H1 (cell line): ENCODE measurements at regions of chr5 and their contacts with region 1.

Region 1: DNA sequence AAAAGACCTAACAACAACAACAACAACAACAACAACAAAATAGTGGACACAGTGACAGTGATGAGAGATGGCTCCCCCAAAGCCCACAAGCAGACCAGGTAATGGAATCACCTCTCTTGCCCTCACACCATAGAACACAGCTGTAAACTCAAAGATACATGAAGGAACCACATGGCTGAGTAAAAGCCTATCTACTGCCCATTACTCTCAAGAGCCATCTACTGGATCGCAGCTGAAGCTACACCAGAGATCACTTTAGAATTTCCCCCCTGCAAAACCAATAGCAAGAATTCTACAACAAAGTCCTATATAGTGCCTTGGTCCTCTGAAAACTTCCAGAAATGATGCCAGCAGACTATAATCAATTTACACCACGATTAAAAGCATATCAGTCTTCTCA is 1537.6 kb upstream of the CDH9 start:
- DNase-seq: no peak
- H3K4me3 ChIP-seq: no peak overlapping the region
- H3K27ac ChIP-seq: no peak overlapping the region
- H3K4me1 ChIP-seq: no peaks in the 10 kb centered on the region
- H3K27me3 ChIP-seq: no peaks in the 10 kb centered on the region
- CTCF ChIP-seq: peak in 2 of 3 experiments; percentile 59 to 67; a peak in 3 of 4 replicates
- EP300 ChIP-seq: no peak
- POLR2A ChIP-seq: no peak
- RAD21 ChIP-seq: peak; percentile 65 to 67

Region 2: DNA sequence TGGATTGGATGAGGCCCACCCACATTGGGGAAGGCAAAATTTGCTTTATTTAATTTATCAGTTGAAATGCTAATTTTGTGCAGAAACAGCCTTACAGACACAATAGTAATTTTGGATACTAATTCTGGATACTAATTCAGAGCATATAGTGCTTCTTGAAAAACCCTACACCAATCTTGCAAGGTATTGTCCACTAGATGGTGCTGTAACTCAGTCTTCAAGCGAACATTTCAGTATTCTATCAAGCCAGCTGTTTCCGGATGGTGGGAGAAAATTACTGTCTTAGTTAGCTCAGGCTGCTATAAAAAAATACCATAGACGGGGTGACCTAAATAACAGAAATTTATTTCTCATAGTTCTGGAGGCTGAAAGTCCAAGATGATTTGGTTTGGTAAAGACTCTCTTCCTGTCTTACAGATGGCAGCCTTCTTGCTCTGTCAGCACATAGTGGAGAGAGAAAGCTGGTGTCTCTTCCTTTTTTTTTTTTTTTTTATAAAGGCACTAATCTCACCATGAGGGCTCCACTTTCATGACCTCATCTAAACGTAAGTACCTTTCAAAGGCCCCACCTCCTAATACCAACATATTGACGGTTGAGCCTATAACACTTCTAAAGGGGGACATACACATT is 231.1 kb before region 1 on chr5:
- CTCF ChIA-PET with region 1: interaction called, 22 read pairs
- POLR2A ChIA-PET with region 1: no interaction called
- DNase-seq: peak in 1 of 2 experiments; percentile 2
- H3K4me3 ChIP-seq: no peak overlapping the region
- H3K27ac ChIP-seq: no peak overlapping the region
- H3K4me1 ChIP-seq: no peaks in the 10 kb centered on the region
- H3K27me3 ChIP-seq: no peaks in the 10 kb centered on the region
- CTCF ChIP-seq: peak in 2 of 3 experiments; percentile 55 to 70; a peak in 2 of 4 replicates
- EP300 ChIP-seq: no peak
- POLR2A ChIP-seq: no peak
- RAD21 ChIP-seq: peak; percentile 85 to 86

Region 3: GRCh38 chr5:28374492-28374934 is 201.5 kb before region 1 on chr5:
- CTCF ChIA-PET with region 1: no interaction called
- POLR2A ChIA-PET with region 1: no interaction called
- DNase-seq: no peak
- H3K4me3 ChIP-seq: no peak overlapping the region
- H3K27ac ChIP-seq: no peak overlapping the region
- H3K4me1 ChIP-seq: no peaks in the 10 kb centered on the region
- H3K27me3 ChIP-seq: no peaks in the 10 kb centered on the region
- CTCF ChIP-seq: no peak
- EP300 ChIP-seq: no peak
- POLR2A ChIP-seq: no peak
- RAD21 ChIP-seq: no peak

Region 4: DNA sequence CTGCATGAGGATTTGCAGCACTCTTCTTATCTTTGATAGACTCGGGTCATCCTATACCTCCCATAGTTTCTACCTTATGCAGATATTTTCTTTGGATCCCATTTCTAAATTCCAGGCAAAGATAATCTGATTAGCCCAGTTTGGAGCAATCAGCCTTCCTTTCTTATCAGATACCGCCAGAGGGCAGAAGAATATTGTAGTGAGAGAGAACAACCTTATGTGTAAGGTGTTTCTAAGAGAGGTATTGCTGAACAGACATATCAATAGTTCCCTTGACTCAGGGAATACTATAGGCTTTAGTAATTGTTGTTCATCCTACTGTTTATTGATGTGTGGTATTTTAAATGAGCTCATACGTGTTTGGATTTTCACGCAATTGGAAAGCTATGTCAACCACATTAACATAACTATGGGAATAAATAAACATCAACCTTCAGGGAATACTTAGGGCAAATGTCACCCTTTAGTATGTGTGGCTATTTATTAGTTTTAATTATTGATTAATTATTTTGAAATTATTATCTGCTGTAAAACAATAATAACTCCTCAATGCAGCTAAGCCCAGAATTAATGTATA is 102.4 kb before region 1 on chr5:
- CTCF ChIA-PET with region 1: interaction called, 19 read pairs
- POLR2A ChIA-PET with region 1: no interaction called
- DNase-seq: no peak
- H3K4me3 ChIP-seq: no peak overlapping the region
- H3K27ac ChIP-seq: no peak overlapping the region
- H3K4me1 ChIP-seq: no peaks in the 10 kb centered on the region
- H3K27me3 ChIP-seq: no peaks in the 10 kb centered on the region
- CTCF ChIP-seq: peak in 2 of 3 experiments; percentile 40 to 44; a peak in 2 of 4 replicates
- EP300 ChIP-seq: no peak
- POLR2A ChIP-seq: no peak
- RAD21 ChIP-seq: peak; percentile 73 to 75

Region 5: DNA sequence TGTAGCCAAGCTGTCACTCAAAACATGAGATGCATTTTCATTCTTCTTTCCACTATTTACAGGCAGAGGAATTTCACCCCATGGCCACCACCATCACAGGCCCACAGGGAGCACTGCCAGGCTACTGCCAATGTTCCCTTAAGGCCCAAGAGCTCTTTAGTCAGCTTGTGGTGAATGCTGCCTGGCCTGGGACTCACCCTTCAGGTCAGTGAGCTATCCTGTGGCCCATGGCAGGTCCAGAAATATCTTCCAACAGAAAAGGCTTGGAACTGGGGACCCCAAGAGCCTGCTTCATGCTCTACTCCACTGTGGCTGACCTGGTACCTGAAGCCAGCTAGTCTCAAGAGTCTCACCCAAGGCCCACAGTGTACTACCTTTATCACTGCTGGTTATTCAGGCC is 18.9 kb before region 1 on chr5:
- CTCF ChIA-PET with region 1: interaction called, 10 read pairs
- POLR2A ChIA-PET with region 1: no interaction called
- DNase-seq: no peak
- H3K4me3 ChIP-seq: no peak overlapping the region
- H3K27ac ChIP-seq: no peak overlapping the region
- H3K4me1 ChIP-seq: no peaks in the 10 kb centered on the region
- H3K27me3 ChIP-seq: no peaks in the 10 kb centered on the region
- CTCF ChIP-seq: no peak
- EP300 ChIP-seq: no peak
- POLR2A ChIP-seq: no peak
- RAD21 ChIP-seq: no peak